MCF 10A (cell line): ENCODE measurements at regions of chr7 and their contacts with region 1.

Region 1: GRCh38 chr7:85750454-85750949 is 563.6 kb upstream of the SEMA3D start:
- DNase-seq: peak; percentile 53
- H3K4me3 Mint-ChIP-seq: no peak overlapping the region
- H3K27ac Mint-ChIP-seq: no peak overlapping the region
- H3K4me1 Mint-ChIP-seq: no peaks in the 10 kb centered on the region
- H3K27me3 Mint-ChIP-seq: peaks cover 72% of the 10 kb centered on the region
- CTCF ChIP-seq: peak; percentile 75

Region 2: GRCh38 chr7:84675633-84676034 is 1074.9 kb before region 1 on chr7:
- CTCF ChIA-PET with region 1: no interaction called
- POLR2A ChIA-PET with region 1: no interaction called
- intact Hi-C with region 1: no loop called
- DNase-seq: peak; percentile 77
- H3K4me3 Mint-ChIP-seq: no peak overlapping the region
- H3K27ac Mint-ChIP-seq: peak overlapping the region; percentile 49
- H3K4me1 Mint-ChIP-seq: peaks cover 27% of the 10 kb centered on the region
- H3K27me3 Mint-ChIP-seq: no peaks in the 10 kb centered on the region
- CTCF ChIP-seq: no peak

Region 3: DNA sequence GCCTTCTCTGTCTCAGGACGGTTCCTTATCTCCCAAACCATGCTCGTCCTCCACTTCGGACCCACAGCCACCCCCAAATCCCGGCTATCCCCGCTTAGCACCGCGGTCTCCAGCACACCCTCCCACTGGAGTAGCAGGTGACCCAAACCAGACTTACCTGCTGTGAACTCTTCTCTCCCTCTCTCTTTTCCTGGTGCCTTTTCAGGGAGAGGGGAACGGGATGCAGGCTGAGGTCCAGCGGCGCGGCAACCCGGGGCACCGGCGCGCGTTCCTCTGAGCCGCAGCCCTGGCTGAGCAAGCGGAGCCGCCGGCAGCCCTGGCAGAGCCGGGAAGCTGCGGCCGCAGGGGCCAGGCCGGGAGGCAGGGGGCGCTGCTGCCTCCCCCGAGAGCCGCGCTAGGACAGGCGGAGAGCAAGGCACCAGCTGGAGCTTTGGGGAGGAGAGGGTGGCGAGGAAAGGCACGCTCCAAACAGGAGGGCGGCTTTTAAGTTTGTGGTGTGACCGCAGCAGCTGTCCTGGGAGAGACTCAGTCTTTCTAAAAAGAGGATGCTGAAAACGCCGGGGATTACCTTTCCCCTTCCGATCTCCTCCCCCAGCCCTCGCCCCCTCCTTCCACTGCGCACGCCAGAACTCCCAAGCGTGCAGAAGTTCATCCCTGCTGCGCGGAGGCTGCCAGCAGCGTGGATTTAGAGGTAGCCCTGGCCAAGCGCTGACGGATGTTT is 563.8 kb before region 1 on chr7 and contains the start of gene SEMA3D:
- CTCF ChIA-PET with region 1: no interaction called
- POLR2A ChIA-PET with region 1: no interaction called
- intact Hi-C with region 1: loop called (anchors 10 kb)
- DNase-seq: peak; percentile 47
- H3K4me3 Mint-ChIP-seq: peak within 1 kb of the TSS; percentile 50
- H3K27ac Mint-ChIP-seq: no peak within 1 kb of the TSS
- H3K4me1 Mint-ChIP-seq: peaks cover 10% of the 10 kb centered on the region
- H3K27me3 Mint-ChIP-seq: peaks cover 84% of the 10 kb centered on the region
- CTCF ChIP-seq: peak; percentile 59
- total RNA-seq, gene SEMA3D: not detected in 2 replicates

Region 4: GRCh38 chr7:85471740-85472139 is 278.8 kb before region 1 on chr7:
- CTCF ChIA-PET with region 1: no interaction called
- POLR2A ChIA-PET with region 1: no interaction called
- intact Hi-C with region 1: loop called (anchors 5 kb)
- DNase-seq: no peak
- H3K4me3 Mint-ChIP-seq: no peak overlapping the region
- H3K27ac Mint-ChIP-seq: no peak overlapping the region
- H3K4me1 Mint-ChIP-seq: no peaks in the 10 kb centered on the region
- H3K27me3 Mint-ChIP-seq: peaks cover 76% of the 10 kb centered on the region
- CTCF ChIP-seq: no peak

Region 5: DNA sequence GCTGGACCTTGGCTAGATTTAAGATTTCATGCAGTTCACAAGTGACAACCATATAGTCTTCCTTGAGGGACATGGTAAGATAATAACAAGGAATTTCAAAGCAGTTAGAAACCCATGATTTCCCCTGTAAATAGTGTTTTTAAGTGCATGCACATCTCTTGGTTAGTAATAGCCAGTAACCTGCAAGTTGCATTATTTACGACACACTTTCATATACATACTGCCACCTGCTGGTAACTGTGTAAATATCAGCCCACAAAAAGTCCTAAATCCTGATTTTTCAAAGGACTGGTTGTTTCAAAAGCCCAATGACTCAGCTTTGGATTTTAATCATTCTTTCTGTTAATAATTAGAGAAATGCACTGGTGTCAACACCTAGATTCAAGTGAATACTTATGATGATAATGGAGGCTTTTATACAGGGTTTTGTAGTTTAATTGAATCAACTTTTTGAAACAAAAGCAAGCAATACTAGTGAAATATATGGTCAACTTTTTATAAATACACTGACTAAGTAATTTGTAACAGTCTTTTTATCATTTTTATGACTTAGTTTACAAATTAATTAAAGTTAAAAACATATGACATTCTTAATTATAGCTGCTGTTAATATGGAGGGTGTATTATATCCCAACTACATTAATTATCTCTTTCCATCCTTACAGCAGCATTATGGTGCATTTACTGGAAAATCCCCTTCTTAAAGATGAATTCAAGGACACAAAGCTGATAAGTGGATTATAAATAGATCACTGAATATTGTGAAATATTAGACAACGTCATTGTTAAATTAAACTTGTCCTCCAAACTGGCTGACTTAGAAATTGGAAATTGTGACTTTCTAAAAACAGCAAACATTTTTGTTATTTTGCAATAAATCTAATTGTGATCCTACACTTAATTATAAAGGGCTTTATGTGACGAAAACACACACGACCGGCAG is 196.0 kb before region 1 on chr7:
- CTCF ChIA-PET with region 1: interaction called, 19 read pairs
- POLR2A ChIA-PET with region 1: no interaction called
- intact Hi-C with region 1: loop called (anchors 2 kb)
- DNase-seq: peak; percentile 54
- H3K4me3 Mint-ChIP-seq: no peak overlapping the region
- H3K27ac Mint-ChIP-seq: no peak overlapping the region
- H3K4me1 Mint-ChIP-seq: no peaks in the 10 kb centered on the region
- H3K27me3 Mint-ChIP-seq: peaks cover 52% of the 10 kb centered on the region
- CTCF ChIP-seq: peak; percentile 78

Region 6: GRCh38 chr7:85733163-85733915 is 17.2 kb before region 1 on chr7:
- CTCF ChIA-PET with region 1: interaction called, 12 read pairs
- POLR2A ChIA-PET with region 1: no interaction called
- intact Hi-C with region 1: no loop called
- DNase-seq: no peak
- H3K4me3 Mint-ChIP-seq: no peak overlapping the region
- H3K27ac Mint-ChIP-seq: no peak overlapping the region
- H3K4me1 Mint-ChIP-seq: peaks cover 13% of the 10 kb centered on the region
- H3K27me3 Mint-ChIP-seq: no peaks in the 10 kb centered on the region
- CTCF ChIP-seq: no peak

Region 7: GRCh38 chr7:85829817-85830432 is 79.4 kb after region 1 on chr7:
- CTCF ChIA-PET with region 1: interaction called, 10 read pairs
- POLR2A ChIA-PET with region 1: no interaction called
- intact Hi-C with region 1: no loop called
- DNase-seq: peak; percentile 12
- H3K4me3 Mint-ChIP-seq: no peak overlapping the region
- H3K27ac Mint-ChIP-seq: no peak overlapping the region
- H3K4me1 Mint-ChIP-seq: no peaks in the 10 kb centered on the region
- H3K27me3 Mint-ChIP-seq: peaks cover 58% of the 10 kb centered on the region
- CTCF ChIP-seq: peak; percentile 38

Region 8: GRCh38 chr7:86558680-86559501 is 808.4 kb after region 1 on chr7:
- CTCF ChIA-PET with region 1: no interaction called
- POLR2A ChIA-PET with region 1: no interaction called
- intact Hi-C with region 1: no loop called
- DNase-seq: no peak
- H3K4me3 Mint-ChIP-seq: no peak overlapping the region
- H3K27ac Mint-ChIP-seq: no peak overlapping the region
- H3K4me1 Mint-ChIP-seq: no peaks in the 10 kb centered on the region
- H3K27me3 Mint-ChIP-seq: peaks cover 16% of the 10 kb centered on the region
- CTCF ChIP-seq: no peak